ENCODE measurements at regions of chr2 and their contacts with region 1.

Region 1: GRCh38 chr2:218659258-218659987 is at the starts of genes BCS1L and ZNF142:
- DNase-seq: peak; percentile 93
- H3K4me3 ChIP-seq: peak within 1 kb of the TSS; percentile 87
- H3K27ac ChIP-seq: peak within 1 kb of the TSS; percentile 55
- H3K4me1 ChIP-seq: peaks cover 17% of the 10 kb centered on the region
- CTCF ChIP-seq: no peak
- total RNA-seq, gene BCS1L: 48.0 and 57.3 TPM in 2 replicates
- total RNA-seq, gene ZNF142: 29.9 and 37.6 TPM in 2 replicates

Region 2: DNA sequence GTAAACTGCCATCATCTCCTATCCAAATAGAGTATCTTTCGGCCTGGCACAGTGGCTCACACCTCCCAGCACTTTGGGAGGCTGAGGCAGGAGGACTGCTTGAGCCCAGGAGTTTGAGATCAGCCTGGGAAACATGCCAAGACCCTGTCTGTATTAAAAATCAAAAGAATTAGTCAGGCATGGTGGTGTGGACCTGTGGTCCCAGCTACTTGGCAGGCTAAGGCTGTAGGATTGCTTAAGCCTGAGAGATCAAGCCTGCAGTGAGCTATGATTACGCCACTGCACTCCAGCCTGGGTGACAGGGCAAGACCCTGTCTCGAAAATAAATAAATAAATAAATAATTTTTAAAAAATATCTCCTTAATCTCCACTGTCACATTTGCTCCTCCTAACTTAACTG is 457.2 kb before region 1 on chr2:
- CTCF ChIA-PET with region 1: no interaction called
- POLR2A ChIA-PET with region 1: no interaction called
- intact Hi-C with region 1: no loop called
- DNase-seq: no peak
- H3K4me3 ChIP-seq: no peak overlapping the region
- H3K27ac ChIP-seq: no peak overlapping the region
- H3K4me1 ChIP-seq: no peaks in the 10 kb centered on the region
- CTCF ChIP-seq: no peak

Region 3: GRCh38 chr2:218466016-218466521 is 193.4 kb before region 1 on chr2:
- CTCF ChIA-PET with region 1: no interaction called
- POLR2A ChIA-PET with region 1: no interaction called
- intact Hi-C with region 1: no loop called
- DNase-seq: peak; percentile 24
- H3K4me3 ChIP-seq: no peak overlapping the region
- H3K27ac ChIP-seq: no peak overlapping the region
- H3K4me1 ChIP-seq: peaks cover 6% of the 10 kb centered on the region
- CTCF ChIP-seq: peak; percentile 87

Region 4: GRCh38 chr2:218568190-218569037 is 91.0 kb before region 1 on chr2 and contains the starts of genes CNOT9 and USP37:
- CTCF ChIA-PET with region 1: interaction called, 4 read pairs
- POLR2A ChIA-PET with region 1: no interaction called
- intact Hi-C with region 1: loop called (anchors 5 kb)
- DNase-seq: peak; percentile 99
- H3K4me3 ChIP-seq: peak within 1 kb of the TSS; percentile 93
- H3K27ac ChIP-seq: peak within 1 kb of the TSS; percentile 89
- H3K4me1 ChIP-seq: peaks cover 31% of the 10 kb centered on the region
- CTCF ChIP-seq: no peak
- total RNA-seq, gene CNOT9: 67.8 and 71.6 TPM in 2 replicates
- total RNA-seq, gene USP37: 23.3 and 31.4 TPM in 2 replicates

Region 5: DNA sequence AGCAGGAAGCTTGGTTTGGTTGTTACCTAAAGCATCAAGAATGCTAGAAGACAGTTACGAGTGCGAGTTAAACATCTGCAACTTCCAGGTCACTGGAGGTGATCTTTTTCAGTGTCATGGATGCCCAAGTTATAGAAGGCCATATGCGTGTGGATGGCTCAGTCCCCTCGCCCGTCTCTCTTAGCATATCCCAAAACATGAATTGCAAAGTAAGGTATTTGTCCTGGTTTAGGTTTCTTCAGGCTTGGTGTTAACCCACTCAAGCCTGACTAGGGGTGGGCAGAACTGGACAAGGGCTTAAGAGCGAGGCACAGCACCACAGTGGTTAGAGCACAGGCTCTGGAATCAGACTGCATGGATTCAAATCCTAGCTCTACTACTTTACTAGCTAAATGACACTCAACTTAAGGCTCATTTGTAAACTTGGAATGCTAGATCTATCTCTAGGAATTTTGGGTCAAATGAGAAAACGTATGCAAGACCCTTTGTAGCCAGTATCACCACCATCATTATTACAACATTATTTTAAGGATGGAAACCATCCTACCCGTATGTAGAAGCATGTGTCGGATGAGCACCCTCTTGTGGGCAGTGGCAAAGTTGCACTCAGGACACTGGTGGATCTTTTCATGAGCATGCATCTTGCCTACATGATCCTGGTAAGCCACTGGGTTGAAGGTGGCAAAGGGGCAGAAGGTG is 11.2 kb before region 1 on chr2:
- CTCF ChIA-PET with region 1: interaction called, 15 read pairs
- POLR2A ChIA-PET with region 1: interaction called, 3 read pairs
- intact Hi-C with region 1: no loop called
- DNase-seq: peak; percentile 67
- H3K4me3 ChIP-seq: no peak overlapping the region
- H3K27ac ChIP-seq: no peak overlapping the region
- H3K4me1 ChIP-seq: no peaks in the 10 kb centered on the region
- CTCF ChIP-seq: peak; percentile 96

Region 6: DNA sequence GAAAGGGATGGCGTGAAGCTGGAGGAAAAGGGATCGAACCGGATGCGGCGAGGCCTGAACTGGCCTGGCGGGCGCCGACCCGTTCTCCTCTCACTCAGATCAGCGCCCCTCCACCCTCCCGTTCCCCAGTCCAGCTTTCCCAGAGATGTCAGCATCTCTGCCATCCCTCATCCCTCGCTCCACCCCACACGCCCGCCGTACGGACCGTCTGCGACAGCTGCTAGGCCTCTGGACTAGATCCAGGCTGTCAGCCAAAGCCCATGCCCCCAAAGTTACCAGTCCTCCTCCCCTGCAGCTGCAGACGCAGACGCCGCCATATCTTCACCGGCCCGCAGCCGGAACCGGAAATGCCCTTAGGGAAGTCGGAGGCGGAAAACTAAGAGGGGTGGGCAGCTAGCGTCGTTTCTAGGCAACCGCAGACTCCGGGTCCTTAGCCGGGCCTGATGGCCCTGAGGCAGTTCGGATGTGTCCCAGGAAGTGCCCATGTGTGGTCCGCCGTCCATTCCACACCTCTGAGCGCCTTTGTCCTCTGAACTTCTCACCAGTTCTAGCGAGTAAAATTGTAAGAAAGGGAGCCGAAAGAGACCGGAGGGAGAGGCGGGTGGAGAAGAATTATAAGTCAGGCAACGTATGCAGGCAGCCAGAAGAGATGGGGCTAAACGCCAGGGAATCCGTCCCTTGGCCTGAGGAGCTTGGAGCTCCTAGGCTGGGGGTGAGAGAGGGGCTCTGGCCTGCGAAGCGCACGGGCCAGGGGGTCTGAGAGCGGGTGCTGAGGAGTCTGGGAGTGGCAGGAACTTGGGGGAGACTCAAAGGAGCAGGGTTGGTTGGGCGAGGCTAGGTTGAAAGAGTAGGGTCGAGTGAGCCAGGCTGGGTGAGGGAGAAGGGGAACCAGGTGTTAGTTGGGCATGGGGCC is 12.5 kb after region 1 on chr2 and contains the starts of genes RNF25 and STK36:
- CTCF ChIA-PET with region 1: interaction called, 16 read pairs
- POLR2A ChIA-PET with region 1: interaction called, 55 read pairs
- intact Hi-C with region 1: loop called (anchors 1 kb)
- DNase-seq: peak; percentile 86
- H3K4me3 ChIP-seq: peak within 1 kb of the TSS; percentile 80
- H3K27ac ChIP-seq: peak within 1 kb of the TSS; percentile 30
- H3K4me1 ChIP-seq: peaks cover 13% of the 10 kb centered on the region
- CTCF ChIP-seq: no peak
- total RNA-seq, gene RNF25: 25.5 and 25.8 TPM in 2 replicates
- total RNA-seq, gene STK36: 9.7 and 13.4 TPM in 2 replicates

Region 7: GRCh38 chr2:218710687-218711549 is 51.5 kb after region 1 on chr2 and contains the start of gene TTLL4:
- CTCF ChIA-PET with region 1: no interaction called
- POLR2A ChIA-PET with region 1: interaction called, 3 read pairs
- intact Hi-C with region 1: loop called (anchors 5 kb)
- DNase-seq: peak; percentile 97
- H3K4me3 ChIP-seq: peak within 1 kb of the TSS; percentile 77
- H3K27ac ChIP-seq: peak within 1 kb of the TSS; percentile 60
- H3K4me1 ChIP-seq: peaks cover 25% of the 10 kb centered on the region
- CTCF ChIP-seq: peak; percentile 86
- total RNA-seq, gene TTLL4: 27.7 and 38.2 TPM in 2 replicates

Region 8: DNA sequence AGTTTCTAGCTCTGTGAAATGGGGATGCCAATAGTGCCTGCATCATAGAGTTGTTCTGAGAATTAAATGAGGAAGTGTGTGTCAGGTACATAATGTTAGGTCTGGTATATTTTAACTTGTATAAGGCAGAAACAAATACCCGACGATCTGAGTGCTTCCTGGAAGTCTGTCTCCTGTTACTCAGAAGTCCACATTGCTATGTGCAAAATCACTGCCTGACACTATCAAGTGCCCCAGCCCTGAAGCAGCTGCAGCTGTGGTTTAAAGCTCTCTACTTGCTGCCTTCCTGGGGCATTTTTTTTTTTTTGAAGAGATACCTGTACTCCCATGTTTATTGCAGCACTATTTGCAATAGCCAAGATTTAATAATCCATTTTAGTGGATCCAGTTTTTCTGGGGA is 1093.3 kb after region 1 on chr2:
- CTCF ChIA-PET with region 1: no interaction called
- POLR2A ChIA-PET with region 1: no interaction called
- intact Hi-C with region 1: no loop called
- DNase-seq: no peak
- H3K4me3 ChIP-seq: no peak overlapping the region
- H3K27ac ChIP-seq: no peak overlapping the region
- H3K4me1 ChIP-seq: no peaks in the 10 kb centered on the region
- CTCF ChIP-seq: no peak

Measured in OCI-LY7 (cell line).